CD4-positive, alpha-beta T cell (primary cell): ENCODE measurements at regions of chr6 and their contacts with region 1.

Region 1: DNA sequence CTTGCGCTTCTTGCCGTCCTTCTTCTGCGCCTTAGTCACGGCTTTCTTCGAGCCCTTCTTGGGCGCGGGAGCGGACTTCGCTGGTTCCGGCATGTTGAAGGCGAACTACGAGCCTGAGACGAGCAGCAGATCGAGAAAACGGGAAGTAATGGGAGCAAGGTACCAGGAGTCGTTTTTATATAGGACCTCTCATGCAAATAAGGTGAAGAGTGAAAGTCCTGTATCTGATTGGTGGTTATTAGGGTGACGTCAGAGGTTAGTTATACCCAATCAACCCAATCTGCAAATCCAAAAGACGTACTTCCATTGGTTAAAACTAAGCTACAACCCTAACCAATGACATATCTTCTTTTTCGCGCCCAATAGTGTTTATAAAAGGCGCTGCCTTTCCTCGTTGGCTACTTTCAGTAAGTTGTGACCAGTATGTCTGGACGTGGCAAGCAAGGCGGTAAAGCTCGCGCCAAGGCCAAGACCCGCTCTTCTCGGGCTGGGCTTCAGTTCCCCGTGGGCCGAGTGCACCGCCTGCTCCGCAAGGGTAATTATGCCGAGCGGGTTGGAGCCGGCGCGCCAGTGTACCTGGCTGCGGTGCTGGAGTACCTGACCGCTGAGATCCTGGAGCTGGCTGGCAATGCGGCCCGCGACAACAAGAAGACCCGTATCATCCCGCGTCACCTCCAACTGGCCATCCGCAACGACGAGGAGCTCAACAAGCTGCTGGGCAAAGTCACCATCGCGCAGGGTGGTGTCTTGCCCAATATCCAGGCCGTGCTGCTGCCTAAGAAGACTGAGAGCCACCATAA is 100.6 kb upstream of the PRSS16 start:
- DNase-seq: peak; percentile 61 to 99 (median 72)
- ATAC-seq: peak; percentile 86
- H3K4me3 ChIP-seq: peak overlapping the region; percentile 69
- H3K4me3 Mint-ChIP-seq: no peak overlapping the region
- H3K27ac ChIP-seq: peak overlapping the region; percentile 84 to 97
- H3K27ac Mint-ChIP-seq: no peak overlapping the region
- H3K4me1 ChIP-seq: peaks cover 17% of the 10 kb centered on the region
- H3K4me1 Mint-ChIP-seq: peaks cover 11% of the 10 kb centered on the region
- H3K27me3 ChIP-seq: no peaks in the 10 kb centered on the region
- H3K27me3 Mint-ChIP-seq: no peaks in the 10 kb centered on the region
- CTCF ChIP-seq: no peak

Region 2: GRCh38 chr6:26045065-26045927 is 1101.6 kb before region 1 on chr6:
- CTCF ChIA-PET with region 1: no interaction called
- POLR2A ChIA-PET with region 1: interaction called, 32 read pairs
- intact Hi-C with region 1: no loop called
- DNase-seq: peak; percentile 49 to 96 (median 74)
- ATAC-seq: peak; percentile 55
- H3K4me3 ChIP-seq: peak overlapping the region; percentile 70
- H3K4me3 Mint-ChIP-seq: peak overlapping the region; percentile 97
- H3K27ac ChIP-seq: peak overlapping the region; percentile 71 to 91
- H3K27ac Mint-ChIP-seq: peak overlapping the region; percentile 94
- H3K4me1 ChIP-seq: peaks cover 21% of the 10 kb centered on the region
- H3K4me1 Mint-ChIP-seq: peaks cover 28% of the 10 kb centered on the region
- H3K27me3 ChIP-seq: no peaks in the 10 kb centered on the region
- H3K27me3 Mint-ChIP-seq: no peaks in the 10 kb centered on the region
- CTCF ChIP-seq: no peak

Region 3: GRCh38 chr6:26249957-26250697 is 896.8 kb before region 1 on chr6:
- CTCF ChIA-PET with region 1: no interaction called
- POLR2A ChIA-PET with region 1: interaction called, 23 read pairs
- intact Hi-C with region 1: no loop called
- DNase-seq: peak; percentile 64 to 93 (median 74)
- ATAC-seq: peak; percentile 78
- H3K4me3 ChIP-seq: peak overlapping the region; percentile 75
- H3K4me3 Mint-ChIP-seq: peak overlapping the region; percentile 97
- H3K27ac ChIP-seq: peak overlapping the region; percentile 72 to 80
- H3K27ac Mint-ChIP-seq: peak overlapping the region; percentile 88
- H3K4me1 ChIP-seq: peaks cover 29% of the 10 kb centered on the region
- H3K4me1 Mint-ChIP-seq: peaks cover 44% of the 10 kb centered on the region
- H3K27me3 ChIP-seq: no peaks in the 10 kb centered on the region
- H3K27me3 Mint-ChIP-seq: no peaks in the 10 kb centered on the region
- CTCF ChIP-seq: no peak

Region 4: DNA sequence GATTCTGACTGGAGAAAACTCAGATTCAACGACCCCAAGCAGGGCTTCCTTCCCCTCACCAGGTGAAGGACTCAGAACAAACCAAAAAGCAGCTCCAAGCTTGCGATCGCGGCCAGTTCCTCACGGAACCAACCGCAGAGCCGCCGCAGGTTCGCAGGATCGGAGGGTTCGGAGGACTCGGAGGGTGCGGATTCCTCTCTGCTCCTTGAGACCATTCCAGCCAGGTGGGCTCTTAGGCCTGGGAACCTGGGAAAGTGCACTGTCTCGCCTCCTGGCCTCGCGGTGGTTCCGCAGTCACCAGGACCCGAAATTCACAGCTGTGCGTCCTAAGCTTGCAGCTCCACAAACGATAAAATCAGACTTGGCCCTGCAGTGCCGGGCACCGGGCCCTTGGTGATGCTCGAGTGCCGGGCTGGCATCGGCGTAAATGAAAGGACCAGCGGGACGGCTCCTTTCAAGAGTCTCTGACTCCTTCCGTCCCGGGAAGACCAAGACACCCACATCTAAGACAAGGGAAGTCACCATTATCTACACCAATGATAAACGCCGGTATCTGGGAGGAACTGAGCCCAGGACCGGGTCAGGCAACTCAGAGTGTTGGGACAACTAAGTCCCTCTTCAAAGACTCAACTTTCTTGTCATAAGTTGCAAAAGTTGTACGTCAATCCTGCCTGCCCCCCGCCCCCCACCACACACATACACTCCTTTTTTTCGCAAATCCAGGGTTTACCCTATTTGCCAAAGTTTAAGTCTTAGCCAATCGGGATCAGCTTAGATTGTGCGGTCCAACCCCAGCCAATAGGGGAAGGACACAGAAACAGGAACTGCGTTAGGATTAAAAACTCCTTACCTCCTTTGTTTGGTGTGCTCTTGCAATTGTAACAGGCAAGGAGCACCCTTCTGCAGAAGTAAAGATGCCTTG is 30.8 kb after region 1 on chr6:
- CTCF ChIA-PET with region 1: interaction called, 6 read pairs
- POLR2A ChIA-PET with region 1: interaction called, 30 read pairs
- intact Hi-C with region 1: no loop called
- DNase-seq: peak; percentile 44 to 90 (median 64)
- ATAC-seq: peak; percentile 64
- H3K4me3 ChIP-seq: peak overlapping the region; percentile 89
- H3K4me3 Mint-ChIP-seq: peak overlapping the region; percentile 99
- H3K27ac ChIP-seq: peak overlapping the region; percentile 27 to 63
- H3K27ac Mint-ChIP-seq: peak overlapping the region; percentile 100
- H3K4me1 ChIP-seq: peaks cover 21% of the 10 kb centered on the region
- H3K4me1 Mint-ChIP-seq: peaks cover 24% of the 10 kb centered on the region
- H3K27me3 ChIP-seq: no peaks in the 10 kb centered on the region
- H3K27me3 Mint-ChIP-seq: peaks cover 24% of the 10 kb centered on the region
- CTCF ChIP-seq: peak; percentile 54

Region 5: GRCh38 chr6:27809939-27810767 is 663.2 kb after region 1 on chr6:
- CTCF ChIA-PET with region 1: interaction called, 3 read pairs
- POLR2A ChIA-PET with region 1: interaction called, 98 read pairs
- intact Hi-C with region 1: no loop called
- DNase-seq: peak; percentile 63 to 98 (median 75)
- ATAC-seq: peak; percentile 61
- H3K4me3 ChIP-seq: peak overlapping the region; percentile 64
- H3K4me3 Mint-ChIP-seq: peak overlapping the region; percentile 95
- H3K27ac ChIP-seq: peak overlapping the region; percentile 69 to 81
- H3K27ac Mint-ChIP-seq: peak overlapping the region; percentile 96
- H3K4me1 ChIP-seq: peaks cover 39% of the 10 kb centered on the region
- H3K4me1 Mint-ChIP-seq: peaks cover 68% of the 10 kb centered on the region
- H3K27me3 ChIP-seq: no peaks in the 10 kb centered on the region
- H3K27me3 Mint-ChIP-seq: no peaks in the 10 kb centered on the region
- CTCF ChIP-seq: no peak

Region 6: GRCh38 chr6:28863604-28864320 is 1716.9 kb after region 1 on chr6:
- CTCF ChIA-PET with region 1: no interaction called
- POLR2A ChIA-PET with region 1: interaction called, 23 read pairs
- intact Hi-C with region 1: no loop called
- DNase-seq: peak; percentile 69 to 93 (median 80)
- ATAC-seq: peak; percentile 39
- H3K4me3 ChIP-seq: peak overlapping the region; percentile 82
- H3K4me3 Mint-ChIP-seq: peak overlapping the region; percentile 88
- H3K27ac ChIP-seq: peak overlapping the region; percentile 30 to 47
- H3K27ac Mint-ChIP-seq: peak overlapping the region; percentile 93
- H3K4me1 ChIP-seq: peaks cover 34% of the 10 kb centered on the region
- H3K4me1 Mint-ChIP-seq: peaks cover 51% of the 10 kb centered on the region
- H3K27me3 ChIP-seq: no peaks in the 10 kb centered on the region
- H3K27me3 Mint-ChIP-seq: peaks cover 7% of the 10 kb centered on the region
- CTCF ChIP-seq: peak; percentile 10